ENCODE measurements at regions of chr7 and their contacts with region 1.

Region 1: GRCh38 chr7:105429746-105430612 is 41.3 kb upstream of the SRPK2 start:
- DNase-seq: peak; percentile 66 to 75
- ATAC-seq: peak; percentile 90
- H3K4me3 ChIP-seq: no peak overlapping the region
- H3K27ac ChIP-seq: no peak overlapping the region
- H3K4me1 ChIP-seq: peaks cover 6% of the 10 kb centered on the region; the same call in 1 of the 3 replicates
- CTCF ChIP-seq: peak; percentile 67
- EP300 ChIP-seq: no peak
- POLR2A ChIP-seq: no peak
- RAD21 ChIP-seq: peak; percentile 66 to 81

Region 2: GRCh38 chr7:105187302-105188169 is 242.4 kb before region 1 on chr7:
- CTCF ChIA-PET with region 1: no interaction called
- POLR2A ChIA-PET with region 1: no interaction called
- DNase-seq: no peak
- ATAC-seq: no peak
- H3K4me3 ChIP-seq: no peak overlapping the region
- H3K27ac ChIP-seq: no peak overlapping the region
- H3K4me1 ChIP-seq: peaks cover 3% of the 10 kb centered on the region; the same call in 1 of the 3 replicates
- CTCF ChIP-seq: no peak
- EP300 ChIP-seq: no peak
- POLR2A ChIP-seq: no peak
- RAD21 ChIP-seq: no peak

Region 3: DNA sequence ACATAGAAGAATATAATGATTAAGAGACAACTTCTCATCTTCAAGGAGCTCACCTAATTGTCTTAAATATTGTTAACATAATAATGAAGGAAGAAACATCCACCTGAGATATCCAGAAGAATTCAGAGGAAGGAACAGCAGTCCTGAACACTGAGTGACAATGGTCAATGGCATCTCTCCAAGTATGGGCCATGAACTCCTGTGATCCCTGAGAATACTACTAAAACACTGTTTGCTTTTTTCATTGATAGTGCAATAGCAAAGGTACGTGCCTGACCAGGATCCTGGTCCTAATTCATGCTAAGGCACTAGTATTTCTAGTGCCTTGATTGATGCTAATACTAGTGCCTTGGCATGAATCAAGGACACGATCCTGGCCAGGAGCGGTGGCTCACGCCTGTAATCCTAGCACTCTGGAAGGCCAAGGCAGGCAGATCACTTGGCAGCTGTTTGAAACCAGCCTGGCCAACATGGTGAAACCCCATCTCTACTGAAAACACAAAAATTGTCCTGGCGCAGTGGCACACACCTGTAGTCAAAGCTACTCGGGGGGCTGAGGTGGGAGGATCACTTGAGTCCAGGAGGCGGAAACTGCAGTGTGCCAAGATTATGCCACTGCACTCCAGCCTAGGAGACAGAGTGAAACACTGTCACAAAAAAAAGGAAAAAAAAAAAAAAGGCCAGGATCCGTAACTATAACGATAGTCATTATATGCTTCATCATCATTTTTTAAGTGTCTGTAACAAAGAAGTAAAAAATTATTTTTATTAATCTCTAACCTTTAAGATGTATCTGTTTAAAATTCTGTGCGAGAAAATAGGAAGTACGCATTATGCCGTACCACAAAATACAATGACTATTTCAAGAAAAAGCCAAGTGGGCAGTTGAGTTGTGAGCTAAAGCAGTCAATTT is 90.3 kb before region 1 on chr7:
- CTCF ChIA-PET with region 1: no interaction called
- POLR2A ChIA-PET with region 1: no interaction called
- DNase-seq: no peak
- ATAC-seq: peak in 1 of 2 experiments; percentile 33; a peak in 1 of 6 replicates
- H3K4me3 ChIP-seq: no peak overlapping the region
- H3K27ac ChIP-seq: no peak overlapping the region
- H3K4me1 ChIP-seq: peaks cover 8% of the 10 kb centered on the region; the same call in 2 of the 3 replicates
- CTCF ChIP-seq: no peak
- EP300 ChIP-seq: no peak
- POLR2A ChIP-seq: no peak
- RAD21 ChIP-seq: no peak

Region 4: DNA sequence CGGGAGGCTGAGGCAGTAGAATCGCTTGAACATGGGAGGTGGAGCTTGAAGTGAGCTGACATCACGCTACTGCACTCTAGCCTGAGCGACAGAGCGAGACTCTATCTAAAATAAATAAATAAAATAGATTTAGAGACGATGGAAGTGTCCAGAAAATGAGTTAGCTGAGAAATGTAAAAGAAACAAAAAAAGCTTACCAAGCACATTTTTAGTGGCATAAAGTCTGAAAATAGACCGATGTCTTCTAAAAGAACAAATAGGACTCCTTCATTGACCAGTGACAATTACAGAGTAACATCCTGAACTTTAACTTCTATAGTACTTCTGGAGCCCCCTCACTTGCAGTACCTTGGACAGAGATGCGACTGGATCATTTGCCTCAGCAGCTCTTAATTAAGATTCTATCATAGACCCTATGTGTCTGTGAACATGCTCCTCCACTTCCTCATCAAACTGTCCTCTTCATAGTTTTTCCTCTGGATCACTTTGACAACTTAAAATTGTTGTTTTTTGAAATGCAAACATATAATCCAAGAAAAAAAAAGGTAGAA is 16.0 kb before region 1 on chr7:
- CTCF ChIA-PET with region 1: interaction called, 21 read pairs
- POLR2A ChIA-PET with region 1: no interaction called
- DNase-seq: no peak
- ATAC-seq: no peak
- H3K4me3 ChIP-seq: no peak overlapping the region
- H3K27ac ChIP-seq: no peak overlapping the region
- H3K4me1 ChIP-seq: no peaks in the 10 kb centered on the region
- CTCF ChIP-seq: no peak
- EP300 ChIP-seq: no peak
- POLR2A ChIP-seq: no peak
- RAD21 ChIP-seq: no peak

Region 5: GRCh38 chr7:105444342-105444987 is 14.5 kb after region 1 on chr7:
- CTCF ChIA-PET with region 1: interaction called, 12 read pairs
- POLR2A ChIA-PET with region 1: no interaction called
- DNase-seq: no peak
- ATAC-seq: no peak
- H3K4me3 ChIP-seq: no peak overlapping the region
- H3K27ac ChIP-seq: no peak overlapping the region
- H3K4me1 ChIP-seq: peaks cover 1% of the 10 kb centered on the region
- CTCF ChIP-seq: no peak
- EP300 ChIP-seq: no peak
- POLR2A ChIP-seq: no peak
- RAD21 ChIP-seq: no peak

Region 6: DNA sequence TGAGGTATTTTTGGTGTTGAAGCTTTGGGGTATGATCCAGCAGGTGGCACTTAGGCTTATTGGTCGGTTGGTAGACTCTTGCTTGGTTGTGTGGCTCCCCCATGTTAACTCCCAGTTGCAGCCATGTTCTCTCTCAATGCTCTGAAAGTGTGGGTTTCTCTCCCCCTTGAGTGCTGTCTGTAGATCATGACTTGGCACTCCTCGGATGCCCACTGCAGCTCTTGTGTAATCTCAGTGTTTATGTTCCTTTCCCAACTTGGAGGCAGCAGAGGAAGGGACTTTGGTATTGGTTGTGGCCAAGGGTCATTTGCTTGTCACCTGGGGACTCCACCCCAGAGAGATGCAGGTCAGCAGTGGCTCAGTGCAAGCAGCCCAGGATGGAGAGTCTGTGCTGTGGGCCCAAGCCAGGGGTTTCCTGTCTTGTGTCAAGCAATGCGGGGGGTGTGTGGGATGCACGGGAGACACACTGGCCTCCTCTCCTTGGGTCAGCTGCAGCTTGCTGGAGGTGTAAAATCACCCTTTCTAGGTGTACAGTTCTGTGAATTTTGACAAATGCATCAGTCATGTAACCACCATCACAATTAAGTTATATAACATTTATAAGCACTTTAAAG is 1472.0 kb after region 1 on chr7:
- CTCF ChIA-PET with region 1: no interaction called
- POLR2A ChIA-PET with region 1: no interaction called
- DNase-seq: no peak
- ATAC-seq: no peak
- H3K4me3 ChIP-seq: no peak overlapping the region
- H3K27ac ChIP-seq: no peak overlapping the region
- H3K4me1 ChIP-seq: no peaks in the 10 kb centered on the region
- CTCF ChIP-seq: no peak
- EP300 ChIP-seq: no peak
- POLR2A ChIP-seq: no peak
- RAD21 ChIP-seq: no peak

Measured in A549 (cell line).